Right lobe of liver (tissue), 6 donors: ENCODE measurements at regions of chr1 and their contacts with region 1.

Region 1: DNA sequence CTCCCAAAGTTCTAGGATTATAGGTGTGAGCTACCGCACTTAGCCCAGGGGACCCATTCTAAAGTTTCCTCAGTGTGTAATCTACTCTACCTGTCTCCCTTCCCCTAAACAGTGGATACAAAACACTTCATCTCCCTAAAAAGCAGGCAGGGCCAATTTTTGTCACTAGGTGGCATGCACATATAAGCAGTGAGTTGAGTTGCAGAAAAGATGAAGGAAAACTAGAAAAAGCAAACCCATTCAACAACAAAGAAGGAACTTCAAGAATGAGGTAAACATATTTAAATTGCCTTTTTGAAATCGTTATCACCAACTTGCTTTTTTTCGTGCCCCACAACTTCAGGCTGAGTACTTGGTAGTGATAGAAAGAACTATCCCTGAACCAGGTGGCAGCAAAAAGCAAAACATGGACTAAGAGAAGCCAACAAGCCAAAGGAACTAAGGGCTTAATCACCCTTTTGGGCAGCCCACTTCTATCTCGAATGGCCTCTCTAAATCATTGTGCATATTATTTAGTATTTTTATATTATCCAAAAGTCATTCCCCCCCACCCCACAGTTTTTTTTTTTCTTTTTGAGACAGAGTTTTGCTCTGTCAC is 19.7 kb upstream of the ALDH9A1 start:
- DNase-seq: peak in 1 of 3 donors; percentile 61
- ATAC-seq: peak; percentile 78 to 88 (median 83)
- H3K4me3 ChIP-seq: no peak overlapping the region
- H3K27ac ChIP-seq: no peak overlapping the region
- H3K4me1 ChIP-seq: peaks cover 0 to 17% (median 6%) of the 10 kb centered on the region in 4 donors
- H3K27me3 ChIP-seq: no peaks in the 10 kb centered on the region
- CTCF ChIP-seq: peak; percentile 65 to 84 (median 74)
- POLR2A ChIP-seq: no peak

Region 2: GRCh38 chr1:165871311-165872067 is 153.5 kb after region 1 on chr1:
- intact Hi-C with region 1: no loop called
- DNase-seq: peak in 2 of 3 donors; percentile 52 to 64
- ATAC-seq: peak; percentile 79 to 95 (median 86)
- H3K4me3 ChIP-seq: no peak overlapping the region
- H3K27ac ChIP-seq: no peak overlapping the region
- H3K4me1 ChIP-seq: peaks cover 0 to 25% (median 0%) of the 10 kb centered on the region in 4 donors
- H3K27me3 ChIP-seq: no peaks in the 10 kb centered on the region
- CTCF ChIP-seq: peak; percentile 28 to 54 (median 36)
- POLR2A ChIP-seq: no peak

Region 3: DNA sequence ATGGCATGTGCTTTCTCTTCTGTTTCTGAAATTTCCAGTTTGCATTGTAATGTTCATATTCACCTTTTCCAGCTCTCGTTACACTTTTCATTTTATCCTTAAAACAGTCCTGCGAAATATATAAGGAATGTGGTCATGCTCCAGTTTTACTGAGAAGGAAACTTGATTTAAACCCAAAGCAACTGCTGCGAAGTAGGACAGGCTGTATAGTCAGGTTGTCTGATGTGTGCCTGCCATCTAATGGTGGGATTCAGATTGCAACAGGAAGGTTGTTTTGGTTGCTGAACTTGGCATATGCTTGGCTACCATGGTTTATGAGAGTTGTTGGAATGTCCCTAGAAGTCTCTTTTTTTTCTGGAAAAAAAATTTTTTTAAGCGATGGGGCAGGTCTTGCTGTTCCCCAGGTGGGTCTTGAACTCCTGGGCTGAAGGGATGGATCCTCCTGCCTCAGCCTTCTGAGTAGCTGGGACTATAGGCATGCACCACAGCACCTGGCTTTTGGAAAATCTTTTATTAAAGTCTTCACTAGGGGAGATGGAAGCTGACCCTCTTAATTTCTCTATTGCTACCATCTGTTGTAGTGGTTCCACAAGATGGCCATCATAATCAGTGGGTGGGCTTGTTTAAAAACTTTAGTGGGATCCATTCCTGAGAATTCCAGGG is 196.2 kb after region 1 on chr1:
- intact Hi-C with region 1: loop called (anchors 10 kb)
- DNase-seq: peak in 1 of 3 donors; percentile 66
- ATAC-seq: peak; percentile 58 to 75 (median 68)
- H3K4me3 ChIP-seq: no peak overlapping the region
- H3K27ac ChIP-seq: no peak overlapping the region
- H3K4me1 ChIP-seq: peaks cover 0 to 29% (median 9%) of the 10 kb centered on the region in 4 donors
- H3K27me3 ChIP-seq: no peaks in the 10 kb centered on the region
- CTCF ChIP-seq: peak; percentile 75 to 98 (median 86)
- POLR2A ChIP-seq: no peak